ENCODE measurements at regions of chr3 and their contacts with region 1.

Region 1: GRCh38 chr3:25843332-25843731 is 53.4 kb downstream of the OXSM start:
- DNase-seq: peak; percentile 60
- ATAC-seq: peak; percentile 31; the same call in 1 of the 2 replicates
- H3K4me3 ChIP-seq: no peak overlapping the region
- H3K27ac ChIP-seq: no peak overlapping the region
- H3K4me1 ChIP-seq: no peaks in the 10 kb centered on the region
- H3K27me3 ChIP-seq: no peaks in the 10 kb centered on the region
- CTCF ChIP-seq: peak; percentile 61

Region 2: DNA sequence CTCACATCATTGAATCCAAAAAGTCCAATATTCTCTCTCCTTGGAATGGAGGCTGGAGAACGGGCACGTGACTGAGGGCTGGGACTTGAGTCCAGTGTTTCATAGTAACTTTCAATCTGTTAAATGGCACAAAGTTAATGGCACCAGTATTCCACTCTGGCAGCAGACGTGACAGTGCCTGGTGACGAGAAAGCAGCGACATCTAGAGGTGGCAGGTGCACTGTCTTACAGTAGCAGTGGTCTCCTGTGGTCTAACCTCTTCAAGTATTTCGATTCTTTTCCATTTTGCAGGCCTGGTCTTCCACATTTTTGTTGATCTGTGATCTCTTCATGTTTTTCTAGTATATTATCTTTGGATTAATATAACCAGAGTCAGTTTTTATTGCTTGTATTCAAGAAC is 53.7 kb after region 1 on chr3:
- CTCF ChIA-PET with region 1: no interaction called
- POLR2A ChIA-PET with region 1: no interaction called
- intact Hi-C with region 1: loop called (anchors 1 kb)
- DNase-seq: peak; percentile 69
- ATAC-seq: peak; percentile 97
- H3K4me3 ChIP-seq: no peak overlapping the region
- H3K27ac ChIP-seq: no peak overlapping the region
- H3K4me1 ChIP-seq: no peaks in the 10 kb centered on the region
- H3K27me3 ChIP-seq: peaks cover 12% of the 10 kb centered on the region; the same call in 1 of the 2 replicates
- CTCF ChIP-seq: peak; percentile 91

Region 3: GRCh38 chr3:25962249-25962648 is 118.9 kb after region 1 on chr3:
- CTCF ChIA-PET with region 1: no interaction called
- POLR2A ChIA-PET with region 1: no interaction called
- intact Hi-C with region 1: loop called (anchors 1 kb)
- DNase-seq: peak; percentile 61
- ATAC-seq: peak; percentile 73
- H3K4me3 ChIP-seq: no peak overlapping the region
- H3K27ac ChIP-seq: no peak overlapping the region
- H3K4me1 ChIP-seq: no peaks in the 10 kb centered on the region
- H3K27me3 ChIP-seq: 0 out of 2 replicates have a peak, but pooled peaks cover 4% of the 10 kb centered on the region
- CTCF ChIP-seq: peak; percentile 72

Region 4: DNA sequence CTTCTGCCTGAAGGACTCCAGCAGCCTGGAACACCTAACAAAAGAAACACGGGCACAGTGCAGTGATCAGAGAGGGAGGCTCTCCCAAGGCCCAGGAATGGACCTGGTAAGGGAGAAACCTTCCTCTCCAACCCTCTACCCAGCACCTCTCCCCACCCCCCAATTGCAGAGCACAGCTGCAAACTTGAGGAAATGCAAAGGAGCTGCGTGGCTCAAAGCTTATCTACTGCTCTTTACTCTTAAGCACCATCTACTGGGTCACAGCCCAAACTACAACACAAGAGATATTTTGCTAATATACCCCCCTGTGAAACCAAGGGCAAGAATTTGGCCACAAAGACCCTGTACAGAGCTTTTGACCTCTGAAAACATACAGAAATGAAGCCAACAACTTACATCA is 274.8 kb after region 1 on chr3:
- CTCF ChIA-PET with region 1: no interaction called
- POLR2A ChIA-PET with region 1: no interaction called
- intact Hi-C with region 1: loop called (anchors 5 kb)
- DNase-seq: no peak
- ATAC-seq: no peak
- H3K4me3 ChIP-seq: no peak overlapping the region
- H3K27ac ChIP-seq: no peak overlapping the region
- H3K4me1 ChIP-seq: no peaks in the 10 kb centered on the region
- H3K27me3 ChIP-seq: no peaks in the 10 kb centered on the region
- CTCF ChIP-seq: peak; percentile 18; the same call in 1 of the 2 replicates

Measured in PC-3 (cell line).